Activated B cell treated with CpG ODN at 0.5 μM for 24 hours (primary cell): ENCODE measurements at regions of chr22 and their contacts with region 1.

Region 1: GRCh38 chr22:23574371-23574811 is 5.7 kb downstream of the IGLL1 start:
- DNase-seq: no peak
- ATAC-seq: no peak
- H3K4me3 Mint-ChIP-seq: no peak overlapping the region
- H3K27ac Mint-ChIP-seq: no peak overlapping the region
- H3K4me1 Mint-ChIP-seq: peaks cover 10% of the 10 kb centered on the region
- H3K27me3 Mint-ChIP-seq: peaks cover 16% of the 10 kb centered on the region
- CTCF ChIP-seq: no peak

Region 2: GRCh38 chr22:25318081-25318823 is 1743.9 kb after region 1 on chr22:
- CTCF ChIA-PET with region 1: no interaction called
- POLR2A ChIA-PET with region 1: no interaction called
- intact Hi-C with region 1: loop called (anchors 10 kb)
- DNase-seq: no peak
- ATAC-seq: no peak
- H3K4me3 Mint-ChIP-seq: no peak overlapping the region
- H3K27ac Mint-ChIP-seq: no peak overlapping the region
- H3K4me1 Mint-ChIP-seq: no peaks in the 10 kb centered on the region
- H3K27me3 Mint-ChIP-seq: no peaks in the 10 kb centered on the region
- CTCF ChIP-seq: no peak